ENCODE measurements at regions of chr13 and their contacts with region 1.

Region 1: DNA sequence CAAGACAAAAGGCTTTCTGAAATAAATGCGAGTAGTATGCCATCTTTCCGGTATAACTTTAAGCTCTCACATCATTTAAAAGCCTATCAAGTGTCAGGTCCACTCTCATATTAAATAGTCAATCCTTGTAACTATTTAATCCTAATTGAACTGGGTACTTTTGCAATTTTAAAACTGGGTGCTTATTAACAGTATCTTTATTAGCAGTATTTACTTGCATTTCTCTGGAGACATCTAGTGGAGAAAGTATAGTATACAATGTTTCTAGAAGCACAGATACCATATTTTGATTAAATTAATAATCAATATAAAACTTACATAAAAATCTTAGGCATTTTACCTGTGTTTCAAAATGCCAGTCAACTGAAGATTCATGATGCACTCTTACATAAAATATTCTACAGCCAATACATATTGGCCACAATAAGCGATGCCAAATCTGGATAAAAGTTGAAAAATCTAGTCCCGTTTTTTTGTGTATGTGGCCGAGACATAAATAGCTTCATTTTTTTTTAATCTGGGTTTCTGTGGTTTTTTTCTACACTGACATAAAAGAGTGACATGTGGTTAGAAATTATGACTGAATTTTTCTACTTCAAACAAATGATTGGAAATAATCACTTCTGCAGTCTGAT is 4.3 kb upstream of the POSTN start:
- DNase-seq: peak; percentile 19
- H3K4me3 ChIP-seq: no peak overlapping the region
- H3K27ac ChIP-seq: no peak overlapping the region
- H3K4me1 ChIP-seq: no peaks in the 10 kb centered on the region
- CTCF ChIP-seq: peak; percentile 77

Region 2: DNA sequence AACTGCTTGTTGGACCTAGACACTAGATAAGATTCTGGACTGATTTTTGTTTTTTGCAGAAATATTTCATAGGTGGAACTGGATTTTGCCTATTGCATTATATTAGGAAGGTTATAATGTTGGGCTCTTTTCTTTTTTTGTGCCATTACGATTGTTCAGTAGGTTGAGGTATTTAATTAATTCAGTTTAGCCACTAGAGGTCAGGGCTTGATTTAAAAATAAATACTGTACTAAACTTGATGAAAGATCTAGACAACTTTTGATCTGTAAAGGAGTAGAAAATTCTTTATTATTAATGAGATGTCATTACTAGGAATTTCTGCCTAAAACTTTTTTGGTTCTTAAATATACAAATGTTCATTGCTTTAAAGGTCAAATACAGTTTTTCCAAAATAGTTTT is 528.2 kb before region 1 on chr13:
- CTCF ChIA-PET with region 1: no interaction called
- POLR2A ChIA-PET with region 1: no interaction called
- intact Hi-C with region 1: loop called (anchors 5 kb)
- DNase-seq: peak; percentile 53
- H3K4me3 ChIP-seq: no peak overlapping the region
- H3K27ac ChIP-seq: no peak overlapping the region
- H3K4me1 ChIP-seq: no peaks in the 10 kb centered on the region
- CTCF ChIP-seq: peak; percentile 87

Region 3: DNA sequence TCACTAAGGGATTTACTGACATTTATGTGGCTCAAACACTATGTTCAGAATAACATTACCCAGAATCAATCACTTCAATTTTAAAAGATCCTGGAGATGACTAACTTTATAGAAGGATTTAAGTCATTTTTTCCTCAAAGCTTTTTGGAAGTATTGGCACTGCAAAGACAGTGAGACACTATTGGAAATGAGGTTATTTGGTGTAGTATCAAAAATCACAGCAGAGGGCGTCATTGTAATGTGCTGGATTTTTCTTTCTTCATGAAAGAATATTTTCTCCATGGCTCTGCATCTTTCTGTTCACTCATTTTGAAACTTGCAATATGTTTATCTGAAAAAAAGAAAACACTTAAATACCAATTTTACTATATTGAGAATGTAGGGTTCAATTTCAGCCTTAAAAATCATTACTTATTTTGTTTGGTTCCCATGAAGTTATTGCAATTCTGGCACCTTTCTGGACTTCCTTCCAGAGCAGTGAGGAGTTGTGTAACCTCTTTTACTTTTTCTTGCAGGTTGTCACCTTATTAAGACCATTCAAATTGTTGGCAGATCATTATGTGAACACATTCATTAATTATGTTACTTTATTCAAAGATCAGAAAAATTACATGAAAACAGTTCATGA is 493.7 kb before region 1 on chr13:
- CTCF ChIA-PET with region 1: no interaction called
- POLR2A ChIA-PET with region 1: no interaction called
- intact Hi-C with region 1: loop called (anchors 10 kb)
- DNase-seq: peak; percentile 27
- H3K4me3 ChIP-seq: no peak overlapping the region
- H3K27ac ChIP-seq: no peak overlapping the region
- H3K4me1 ChIP-seq: no peaks in the 10 kb centered on the region
- CTCF ChIP-seq: peak; percentile 86

Region 4: GRCh38 chr13:37306778-37307544 is 295.9 kb before region 1 on chr13:
- CTCF ChIA-PET with region 1: no interaction called
- POLR2A ChIA-PET with region 1: no interaction called
- intact Hi-C with region 1: loop called (anchors 10 kb)
- DNase-seq: no peak
- H3K4me3 ChIP-seq: no peak overlapping the region
- H3K27ac ChIP-seq: no peak overlapping the region
- H3K4me1 ChIP-seq: no peaks in the 10 kb centered on the region
- CTCF ChIP-seq: no peak

Region 5: GRCh38 chr13:37576601-37577000 is 26.3 kb before region 1 on chr13:
- CTCF ChIA-PET with region 1: no interaction called
- POLR2A ChIA-PET with region 1: no interaction called
- intact Hi-C with region 1: no loop called
- DNase-seq: no peak
- H3K4me3 ChIP-seq: no peak overlapping the region
- H3K27ac ChIP-seq: no peak overlapping the region
- H3K4me1 ChIP-seq: no peaks in the 10 kb centered on the region
- CTCF ChIP-seq: no peak